Activated B cell treated with CpG ODN at 0.5 μM for 24 hours (primary cell): ENCODE measurements at regions of chr15 and their contacts with region 1.

Region 1: GRCh38 chr15:90071208-90071807 is 31.0 kb downstream of the IDH2 start:
- DNase-seq: peak; percentile 53
- ATAC-seq: peak; percentile 97
- H3K4me3 Mint-ChIP-seq: no peak overlapping the region
- H3K27ac Mint-ChIP-seq: no peak overlapping the region
- H3K4me1 Mint-ChIP-seq: peaks cover 8% of the 10 kb centered on the region
- H3K27me3 Mint-ChIP-seq: no peaks in the 10 kb centered on the region
- CTCF ChIP-seq: peak; percentile 46

Region 2: DNA sequence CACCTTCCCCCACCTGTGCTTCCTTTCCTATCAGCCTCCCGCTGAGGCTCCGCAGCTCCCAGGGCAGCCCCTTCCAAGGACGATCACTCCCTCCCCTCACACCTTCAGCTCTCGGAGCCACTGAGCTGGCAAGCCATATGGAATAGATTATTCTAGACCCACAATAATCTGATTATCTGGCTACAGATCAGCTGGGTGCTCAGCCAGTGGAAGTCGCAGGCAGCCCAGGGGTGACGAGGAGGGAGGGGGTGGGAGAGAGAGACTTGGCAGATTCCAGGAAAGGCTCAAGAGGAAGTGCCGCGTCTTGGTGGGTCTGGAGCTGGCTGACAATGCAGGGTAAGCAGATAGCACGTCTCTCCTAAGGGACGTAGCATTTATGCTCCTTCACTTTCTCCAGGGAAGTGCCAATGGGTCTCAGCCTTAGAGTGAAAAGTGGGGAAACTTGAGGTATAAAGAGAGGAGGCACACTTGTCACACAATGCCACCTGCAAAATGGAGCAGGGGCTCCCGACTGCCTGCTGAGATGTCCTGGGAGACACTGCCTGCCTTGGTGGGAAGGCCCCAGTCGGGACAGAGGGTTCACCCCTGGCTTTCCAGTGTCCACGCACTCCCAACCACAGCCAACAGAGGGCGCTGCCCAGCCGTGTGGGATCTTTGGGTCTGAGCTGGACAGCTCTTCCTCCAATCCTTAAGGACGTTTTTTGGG is 310.9 kb before region 1 on chr15:
- CTCF ChIA-PET with region 1: interaction called, 8 read pairs
- POLR2A ChIA-PET with region 1: no interaction called
- intact Hi-C with region 1: loop called (anchors 5 kb)
- DNase-seq: peak; percentile 75
- ATAC-seq: peak; percentile 90
- H3K4me3 Mint-ChIP-seq: no peak overlapping the region
- H3K27ac Mint-ChIP-seq: no peak overlapping the region
- H3K4me1 Mint-ChIP-seq: peaks cover 3% of the 10 kb centered on the region
- H3K27me3 Mint-ChIP-seq: no peaks in the 10 kb centered on the region
- CTCF ChIP-seq: peak; percentile 73

Region 3: DNA sequence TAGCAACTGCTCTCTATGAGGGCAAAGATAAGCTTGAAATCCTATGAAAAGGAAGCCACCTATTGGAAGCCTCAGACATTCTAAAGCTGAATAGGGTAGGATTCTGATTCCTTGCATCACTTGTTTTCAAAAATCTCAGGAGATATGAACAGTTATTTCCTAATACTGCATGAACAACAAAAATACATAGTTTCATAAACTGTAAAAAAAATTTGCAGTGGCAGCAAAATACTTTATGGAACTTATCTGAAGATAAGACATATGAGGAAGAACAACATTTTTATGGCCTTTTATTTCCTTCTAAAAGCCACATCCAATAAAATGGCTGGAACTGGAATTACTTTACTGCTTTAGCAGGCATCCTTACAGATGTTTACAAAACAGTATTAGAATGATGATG is 207.4 kb before region 1 on chr15:
- CTCF ChIA-PET with region 1: no interaction called
- POLR2A ChIA-PET with region 1: no interaction called
- intact Hi-C with region 1: no loop called
- DNase-seq: no peak
- ATAC-seq: no peak
- H3K4me3 Mint-ChIP-seq: no peak overlapping the region
- H3K27ac Mint-ChIP-seq: no peak overlapping the region
- H3K4me1 Mint-ChIP-seq: peaks cover 10% of the 10 kb centered on the region
- H3K27me3 Mint-ChIP-seq: no peaks in the 10 kb centered on the region
- CTCF ChIP-seq: no peak

Region 4: GRCh38 chr15:89893696-89894455 is 177.4 kb before region 1 on chr15 and contains the start of gene AP3S2:
- CTCF ChIA-PET with region 1: interaction called, 43 read pairs
- POLR2A ChIA-PET with region 1: interaction called, 23 read pairs
- intact Hi-C with region 1: loop called (anchors 1 kb)
- DNase-seq: peak; percentile 82
- ATAC-seq: peak; percentile 89
- H3K4me3 Mint-ChIP-seq: peak within 1 kb of the TSS; percentile 95
- H3K27ac Mint-ChIP-seq: peak within 1 kb of the TSS; percentile 94
- H3K4me1 Mint-ChIP-seq: peaks cover 40% of the 10 kb centered on the region
- H3K27me3 Mint-ChIP-seq: no peaks in the 10 kb centered on the region
- CTCF ChIP-seq: no peak
- total RNA-seq, gene AP3S2: 31.8 and 36.4 TPM in 2 replicates

Region 5: GRCh38 chr15:89991312-89991711 is 80.0 kb before region 1 on chr15:
- CTCF ChIA-PET with region 1: no interaction called
- POLR2A ChIA-PET with region 1: no interaction called
- intact Hi-C with region 1: no loop called
- DNase-seq: no peak
- ATAC-seq: peak; percentile 50
- H3K4me3 Mint-ChIP-seq: no peak overlapping the region
- H3K27ac Mint-ChIP-seq: no peak overlapping the region
- H3K4me1 Mint-ChIP-seq: no peaks in the 10 kb centered on the region
- H3K27me3 Mint-ChIP-seq: no peaks in the 10 kb centered on the region
- CTCF ChIP-seq: no peak

Region 6: GRCh38 chr15:90001683-90002427 is 69.5 kb before region 1 on chr15:
- CTCF ChIA-PET with region 1: interaction called, 10 read pairs
- POLR2A ChIA-PET with region 1: interaction called, 51 read pairs
- intact Hi-C with region 1: loop called (anchors 1 kb)
- DNase-seq: peak; percentile 59
- ATAC-seq: peak; percentile 60
- H3K4me3 Mint-ChIP-seq: peak overlapping the region; percentile 91
- H3K27ac Mint-ChIP-seq: peak overlapping the region; percentile 91
- H3K4me1 Mint-ChIP-seq: peaks cover 41% of the 10 kb centered on the region
- H3K27me3 Mint-ChIP-seq: no peaks in the 10 kb centered on the region
- CTCF ChIP-seq: no peak

Region 7: GRCh38 chr15:90031231-90031791 is 40.0 kb before region 1 on chr15:
- CTCF ChIA-PET with region 1: interaction called, 4 read pairs
- POLR2A ChIA-PET with region 1: no interaction called
- intact Hi-C with region 1: loop called (anchors 1 kb)
- DNase-seq: no peak
- ATAC-seq: peak; percentile 91
- H3K4me3 Mint-ChIP-seq: peak overlapping the region; percentile 67
- H3K27ac Mint-ChIP-seq: peak overlapping the region; percentile 76
- H3K4me1 Mint-ChIP-seq: peaks cover 58% of the 10 kb centered on the region
- H3K27me3 Mint-ChIP-seq: no peaks in the 10 kb centered on the region
- CTCF ChIP-seq: no peak

Region 8: DNA sequence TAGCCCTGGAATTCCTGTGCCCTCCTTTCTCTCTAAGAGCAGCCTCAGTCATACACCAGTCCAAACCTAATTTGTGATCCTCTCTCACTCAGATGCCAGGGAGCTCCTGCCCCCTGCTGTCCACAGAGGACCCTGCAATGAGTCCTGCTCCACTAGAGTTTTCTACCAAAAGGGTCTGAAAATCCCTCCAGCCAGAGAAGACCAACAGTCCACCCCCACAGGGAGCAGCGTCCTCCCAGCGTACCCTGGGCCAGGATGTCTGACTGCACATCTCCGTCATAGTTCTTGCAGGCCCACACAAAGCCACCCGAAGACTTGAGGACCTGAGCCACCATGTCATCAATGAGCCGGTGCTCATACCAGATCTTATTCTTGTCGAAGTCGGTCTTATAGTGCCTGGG is 15.6 kb after region 1 on chr15:
- CTCF ChIA-PET with region 1: interaction called, 15 read pairs
- POLR2A ChIA-PET with region 1: no interaction called
- intact Hi-C with region 1: no loop called
- DNase-seq: peak; percentile 45
- ATAC-seq: peak; percentile 79
- H3K4me3 Mint-ChIP-seq: no peak overlapping the region
- H3K27ac Mint-ChIP-seq: no peak overlapping the region
- H3K4me1 Mint-ChIP-seq: peaks cover 15% of the 10 kb centered on the region
- H3K27me3 Mint-ChIP-seq: no peaks in the 10 kb centered on the region
- CTCF ChIP-seq: peak; percentile 22